ENCODE measurements at regions of chr6 and their contacts with region 1.

Region 1: GRCh38 chr6:157756708-157757429 is 66.2 kb upstream of the SNX9 start:
- DNase-seq: peak; percentile 90
- ATAC-seq: peak; percentile 64
- H3K4me3 ChIP-seq: peak overlapping the region in 1 of 5 experiments; percentile 15
- H3K4me3 Mint-ChIP-seq: peak overlapping the region; percentile 61
- H3K27ac ChIP-seq: no peak overlapping the region
- H3K27ac Mint-ChIP-seq: peak overlapping the region; percentile 41
- H3K4me1 ChIP-seq: peaks cover 28 to 43% of the 10 kb centered on the region in 2 donors
- H3K4me1 Mint-ChIP-seq: peaks cover 58% of the 10 kb centered on the region
- H3K27me3 ChIP-seq: peaks cover 0 to 5% (median 1%) of the 10 kb centered on the region in 4 experiments
- H3K27me3 Mint-ChIP-seq: peaks cover 13% of the 10 kb centered on the region
- CTCF ChIP-seq: peak; percentile 88

Region 2: DNA sequence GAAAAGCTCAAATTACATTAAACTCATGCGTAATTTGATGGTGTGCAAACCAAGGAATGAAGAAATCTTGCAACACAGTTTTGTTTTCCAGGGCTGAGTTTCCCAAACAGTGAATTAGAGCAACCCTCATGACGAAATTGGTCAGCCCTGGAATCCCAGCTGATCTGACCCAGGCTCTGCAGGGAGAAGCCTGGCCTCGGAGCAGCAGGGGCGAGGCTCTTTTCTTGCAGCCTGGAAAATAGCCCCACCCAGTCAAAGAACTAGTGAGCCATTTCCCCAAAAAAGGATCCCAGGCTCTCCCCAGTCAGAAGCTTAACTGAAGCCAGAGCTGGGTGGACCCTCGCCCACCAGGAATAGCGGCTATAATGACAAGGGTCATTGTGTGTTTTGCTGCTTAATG is 41.1 kb before region 1 on chr6:
- CTCF ChIA-PET with region 1: no interaction called
- POLR2A ChIA-PET with region 1: no interaction called
- intact Hi-C with region 1: no loop called
- DNase-seq: no peak
- ATAC-seq: no peak
- H3K4me3 ChIP-seq: no peak overlapping the region
- H3K4me3 Mint-ChIP-seq: no peak overlapping the region
- H3K27ac ChIP-seq: no peak overlapping the region
- H3K27ac Mint-ChIP-seq: no peak overlapping the region
- H3K4me1 ChIP-seq: no peaks in the 10 kb centered on the region
- H3K4me1 Mint-ChIP-seq: no peaks in the 10 kb centered on the region
- H3K27me3 ChIP-seq: peaks cover 0 to 14% (median 0%) of the 10 kb centered on the region in 4 experiments
- H3K27me3 Mint-ChIP-seq: peaks cover 16% of the 10 kb centered on the region
- CTCF ChIP-seq: no peak

Region 3: GRCh38 chr6:157804448-157805327 is 47.8 kb after region 1 on chr6:
- CTCF ChIA-PET with region 1: interaction called, 14 read pairs
- POLR2A ChIA-PET with region 1: no interaction called
- intact Hi-C with region 1: loop called (anchors 5 kb)
- DNase-seq: no peak
- ATAC-seq: no peak
- H3K4me3 ChIP-seq: no peak overlapping the region
- H3K4me3 Mint-ChIP-seq: no peak overlapping the region
- H3K27ac ChIP-seq: no peak overlapping the region
- H3K27ac Mint-ChIP-seq: no peak overlapping the region
- H3K4me1 ChIP-seq: no peaks in the 10 kb centered on the region
- H3K4me1 Mint-ChIP-seq: peaks cover 8% of the 10 kb centered on the region
- H3K27me3 ChIP-seq: peaks cover 0 to 3% (median 0%) of the 10 kb centered on the region in 4 experiments
- H3K27me3 Mint-ChIP-seq: no peaks in the 10 kb centered on the region
- CTCF ChIP-seq: no peak

Region 4: DNA sequence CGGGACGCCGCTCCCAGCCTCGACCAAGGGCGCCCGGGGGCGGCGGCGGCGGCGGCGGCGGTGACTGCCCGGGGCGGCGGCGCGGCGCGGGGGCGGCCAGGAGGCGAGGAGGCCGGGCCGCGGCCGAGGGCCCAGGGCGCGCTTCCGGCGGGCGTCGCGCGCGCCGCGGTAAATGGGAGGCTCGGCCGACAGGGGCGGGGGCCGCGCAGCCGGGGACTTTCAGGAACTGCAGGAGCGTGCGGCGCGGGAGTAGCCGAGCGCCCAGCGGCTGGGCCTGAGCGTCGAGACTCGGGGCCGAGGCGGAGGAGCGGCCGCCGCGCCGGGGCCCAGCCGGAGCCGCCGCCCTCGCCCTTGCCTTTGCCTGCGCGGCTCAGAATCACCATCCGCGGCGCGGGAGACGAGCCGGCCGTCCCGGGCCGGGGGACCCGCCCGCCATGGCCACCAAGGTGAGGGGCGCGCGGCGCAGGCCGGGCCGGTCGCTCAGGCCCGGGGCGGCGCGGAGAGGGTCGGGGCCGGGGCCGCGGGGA is 66.2 kb after region 1 on chr6 and contains the start of gene SNX9:
- CTCF ChIA-PET with region 1: interaction called, 11 read pairs
- POLR2A ChIA-PET with region 1: interaction called, 4 read pairs
- intact Hi-C with region 1: no loop called
- DNase-seq: peak; percentile 85
- ATAC-seq: peak; percentile 67
- H3K4me3 ChIP-seq: peak within 1 kb of the TSS; percentile 62 to 91 (median 86)
- H3K4me3 Mint-ChIP-seq: peak within 1 kb of the TSS; percentile 94
- H3K27ac ChIP-seq: peak within 1 kb of the TSS; percentile 74 to 95
- H3K27ac Mint-ChIP-seq: peak within 1 kb of the TSS; percentile 97
- H3K4me1 ChIP-seq: peaks cover 16 to 17% of the 10 kb centered on the region in 2 donors
- H3K4me1 Mint-ChIP-seq: peaks cover 43% of the 10 kb centered on the region
- H3K27me3 ChIP-seq: no peaks in the 10 kb centered on the region
- H3K27me3 Mint-ChIP-seq: no peaks in the 10 kb centered on the region
- CTCF ChIP-seq: no peak
- total RNA-seq, gene SNX9: 50.7 and 53.0 TPM in 2 replicates

Region 5: GRCh38 chr6:157867155-157867559 is 110.3 kb after region 1 on chr6:
- CTCF ChIA-PET with region 1: interaction called, 340 read pairs
- POLR2A ChIA-PET with region 1: no interaction called
- intact Hi-C with region 1: no loop called
- DNase-seq: no peak
- ATAC-seq: no peak
- H3K4me3 ChIP-seq: no peak overlapping the region
- H3K4me3 Mint-ChIP-seq: no peak overlapping the region
- H3K27ac ChIP-seq: no peak overlapping the region
- H3K27ac Mint-ChIP-seq: peak overlapping the region; percentile 39
- H3K4me1 ChIP-seq: no peaks in the 10 kb centered on the region
- H3K4me1 Mint-ChIP-seq: peaks cover 16% of the 10 kb centered on the region
- H3K27me3 ChIP-seq: no peaks in the 10 kb centered on the region
- H3K27me3 Mint-ChIP-seq: no peaks in the 10 kb centered on the region
- CTCF ChIP-seq: no peak

Region 6: GRCh38 chr6:157885211-157885788 is 128.4 kb after region 1 on chr6:
- CTCF ChIA-PET with region 1: interaction called, 340 read pairs
- POLR2A ChIA-PET with region 1: no interaction called
- intact Hi-C with region 1: no loop called
- DNase-seq: peak; percentile 85
- ATAC-seq: peak; percentile 80
- H3K4me3 ChIP-seq: peak overlapping the region in 1 of 5 experiments; percentile 23
- H3K4me3 Mint-ChIP-seq: peak overlapping the region; percentile 51
- H3K27ac ChIP-seq: peak overlapping the region; percentile 66 to 71
- H3K27ac Mint-ChIP-seq: peak overlapping the region; percentile 78
- H3K4me1 ChIP-seq: peaks cover 16 to 19% of the 10 kb centered on the region in 2 donors
- H3K4me1 Mint-ChIP-seq: peaks cover 54% of the 10 kb centered on the region
- H3K27me3 ChIP-seq: no peaks in the 10 kb centered on the region
- H3K27me3 Mint-ChIP-seq: no peaks in the 10 kb centered on the region
- CTCF ChIP-seq: no peak

Region 7: DNA sequence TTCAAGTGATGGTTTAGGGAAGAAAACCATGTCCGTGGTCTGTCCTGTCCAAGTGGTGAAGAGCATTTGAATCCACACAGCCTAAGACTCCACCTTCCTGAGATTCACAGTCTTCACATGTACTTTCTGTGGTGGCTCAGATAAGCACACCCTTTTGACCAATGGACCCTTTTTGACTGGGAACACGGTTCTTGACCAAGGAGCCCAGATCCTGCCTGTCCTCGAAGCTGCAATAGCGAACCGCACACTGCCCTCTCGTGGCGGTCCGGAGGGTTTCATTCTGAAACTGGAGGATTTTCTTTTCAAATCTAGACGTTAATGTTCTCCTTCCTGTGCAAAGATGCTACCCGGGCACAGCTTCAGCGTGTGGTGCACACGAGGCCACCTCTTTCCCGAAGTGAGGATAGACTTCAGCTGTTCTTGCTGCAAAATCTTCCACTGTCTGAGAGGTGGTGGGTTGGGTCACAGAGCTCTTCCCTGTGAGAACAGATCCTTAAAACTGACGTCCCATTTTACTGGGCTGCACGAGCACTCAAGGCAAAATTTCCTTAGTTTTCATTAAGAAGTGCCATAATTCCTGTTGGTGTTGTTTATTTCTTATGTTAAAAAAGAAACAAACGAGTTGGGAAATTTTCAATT is 315.3 kb after region 1 on chr6:
- CTCF ChIA-PET with region 1: interaction called, 18 read pairs
- POLR2A ChIA-PET with region 1: interaction called, 3 read pairs
- intact Hi-C with region 1: loop called (anchors 2 kb)
- DNase-seq: peak; percentile 71
- ATAC-seq: peak; percentile 63
- H3K4me3 ChIP-seq: no peak overlapping the region
- H3K4me3 Mint-ChIP-seq: no peak overlapping the region
- H3K27ac ChIP-seq: no peak overlapping the region
- H3K27ac Mint-ChIP-seq: peak overlapping the region; percentile 22
- H3K4me1 ChIP-seq: peaks cover 0 to 5% of the 10 kb centered on the region in 2 donors
- H3K4me1 Mint-ChIP-seq: peaks cover 2% of the 10 kb centered on the region
- H3K27me3 ChIP-seq: no peaks in the 10 kb centered on the region
- H3K27me3 Mint-ChIP-seq: no peaks in the 10 kb centered on the region
- CTCF ChIP-seq: peak; percentile 85

Measured in B cell (primary cell).